Activated CD8-positive, alpha-beta T cell treated with anti-CD3 and anti-CD28 coated beads for 36 hours (primary cell): ENCODE measurements at regions of chr22 and their contacts with region 1.

Region 1: GRCh38 chr22:30634471-30635233 is 929 bp upstream of the SLC35E4 start:
- DNase-seq: peak; percentile 93
- ATAC-seq: peak; percentile 67
- H3K4me3 Mint-ChIP-seq: peak overlapping the region; percentile 78
- H3K27ac Mint-ChIP-seq: peak overlapping the region; percentile 90
- H3K4me1 Mint-ChIP-seq: peaks cover 21% of the 10 kb centered on the region
- H3K27me3 Mint-ChIP-seq: no peaks in the 10 kb centered on the region
- CTCF ChIP-seq: peak; percentile 94

Region 2: DNA sequence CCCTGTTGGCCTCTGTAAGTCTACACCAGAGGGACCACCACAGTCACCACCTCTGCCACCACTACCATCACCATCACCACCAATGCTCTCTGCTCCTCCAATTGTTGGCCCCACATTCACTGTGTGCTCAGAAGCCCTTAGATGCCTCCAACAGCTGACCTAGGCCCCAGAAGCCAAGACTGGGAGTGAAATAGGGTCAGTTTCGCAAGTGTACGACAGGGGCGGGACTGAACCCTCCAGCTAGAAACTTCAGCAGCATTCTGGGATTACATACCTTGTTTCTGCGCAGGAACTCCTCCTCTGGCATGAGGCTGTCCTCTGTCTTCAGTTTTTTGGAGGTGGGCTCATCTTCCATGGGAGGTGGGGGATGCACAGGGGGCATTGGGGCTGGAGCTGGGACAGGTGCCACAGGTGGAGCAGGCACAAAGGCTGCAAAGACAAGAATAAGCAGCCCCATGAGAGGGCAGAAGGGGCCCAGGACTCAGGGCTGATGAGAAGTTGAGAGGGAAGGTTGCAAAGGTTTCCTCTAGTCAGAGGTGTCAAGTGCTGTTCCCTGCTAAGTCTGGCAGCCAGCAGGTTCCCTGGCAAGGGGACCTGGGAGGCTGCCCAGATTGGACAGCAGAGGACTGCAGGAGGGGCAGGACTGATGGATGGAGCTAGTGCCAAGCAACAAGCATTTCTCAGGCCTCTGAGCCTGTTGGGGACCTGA is 297.7 kb before region 1 on chr22:
- CTCF ChIA-PET with region 1: no interaction called
- POLR2A ChIA-PET with region 1: no interaction called
- intact Hi-C with region 1: no loop called
- DNase-seq: no peak
- ATAC-seq: no peak
- H3K4me3 Mint-ChIP-seq: no peak overlapping the region
- H3K27ac Mint-ChIP-seq: peak overlapping the region; percentile 15
- H3K4me1 Mint-ChIP-seq: peaks cover 27% of the 10 kb centered on the region
- H3K27me3 Mint-ChIP-seq: no peaks in the 10 kb centered on the region
- CTCF ChIP-seq: no peak

Region 3: GRCh38 chr22:30413745-30414524 is 220.7 kb before region 1 on chr22:
- CTCF ChIA-PET with region 1: no interaction called
- POLR2A ChIA-PET with region 1: no interaction called
- intact Hi-C with region 1: no loop called
- DNase-seq: no peak
- ATAC-seq: peak; percentile 53
- H3K4me3 Mint-ChIP-seq: no peak overlapping the region
- H3K27ac Mint-ChIP-seq: peak overlapping the region; percentile 79
- H3K4me1 Mint-ChIP-seq: peaks cover 35% of the 10 kb centered on the region
- H3K27me3 Mint-ChIP-seq: no peaks in the 10 kb centered on the region
- CTCF ChIP-seq: no peak

Region 4: DNA sequence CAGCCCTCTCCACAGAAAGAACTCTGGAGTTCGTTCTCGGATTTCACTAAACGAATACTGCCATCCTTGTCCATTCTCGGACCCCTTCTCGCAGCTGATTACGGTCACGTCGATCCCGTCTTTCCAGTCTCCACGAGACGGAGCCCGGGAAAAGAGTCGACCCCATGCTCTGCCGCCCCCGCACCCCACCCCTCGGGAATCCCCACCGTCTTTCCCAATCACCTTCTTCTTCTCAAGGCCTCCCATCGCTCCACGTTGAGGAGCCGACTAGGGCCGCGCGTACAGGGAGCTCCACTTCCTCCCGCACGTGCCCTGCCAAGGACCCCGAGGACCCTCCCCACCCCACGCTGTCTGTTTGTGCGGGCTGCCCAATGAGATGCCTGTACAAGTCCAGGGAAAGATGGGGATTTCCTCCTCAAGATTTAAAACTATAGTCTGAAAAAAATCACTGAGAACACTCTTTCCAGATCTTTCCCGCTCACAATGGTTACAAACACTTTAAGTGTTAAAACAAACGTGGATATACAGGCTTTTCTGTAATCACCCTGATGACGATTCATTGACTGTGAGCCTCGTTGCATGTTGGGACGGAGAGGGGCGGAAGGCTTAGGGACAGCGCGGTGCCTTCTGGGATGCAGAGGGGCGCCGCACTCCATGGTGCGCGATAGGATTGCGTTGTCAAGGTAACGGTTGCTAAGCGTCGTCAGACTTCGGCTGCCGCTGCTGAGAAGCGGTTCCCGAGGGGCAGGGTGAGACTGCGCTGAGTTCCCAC is 42.9 kb before region 1 on chr22 and contains the start of gene PES1:
- CTCF ChIA-PET with region 1: interaction called, 12 read pairs
- POLR2A ChIA-PET with region 1: no interaction called
- intact Hi-C with region 1: no loop called
- DNase-seq: peak; percentile 97
- ATAC-seq: peak; percentile 100
- H3K4me3 Mint-ChIP-seq: no peak within 1 kb of the TSS
- H3K27ac Mint-ChIP-seq: no peak within 1 kb of the TSS
- H3K4me1 Mint-ChIP-seq: peaks cover 15% of the 10 kb centered on the region
- H3K27me3 Mint-ChIP-seq: peaks cover 2% of the 10 kb centered on the region
- CTCF ChIP-seq: no peak
- total RNA-seq, gene PES1: 123 to 131 TPM

Region 5: DNA sequence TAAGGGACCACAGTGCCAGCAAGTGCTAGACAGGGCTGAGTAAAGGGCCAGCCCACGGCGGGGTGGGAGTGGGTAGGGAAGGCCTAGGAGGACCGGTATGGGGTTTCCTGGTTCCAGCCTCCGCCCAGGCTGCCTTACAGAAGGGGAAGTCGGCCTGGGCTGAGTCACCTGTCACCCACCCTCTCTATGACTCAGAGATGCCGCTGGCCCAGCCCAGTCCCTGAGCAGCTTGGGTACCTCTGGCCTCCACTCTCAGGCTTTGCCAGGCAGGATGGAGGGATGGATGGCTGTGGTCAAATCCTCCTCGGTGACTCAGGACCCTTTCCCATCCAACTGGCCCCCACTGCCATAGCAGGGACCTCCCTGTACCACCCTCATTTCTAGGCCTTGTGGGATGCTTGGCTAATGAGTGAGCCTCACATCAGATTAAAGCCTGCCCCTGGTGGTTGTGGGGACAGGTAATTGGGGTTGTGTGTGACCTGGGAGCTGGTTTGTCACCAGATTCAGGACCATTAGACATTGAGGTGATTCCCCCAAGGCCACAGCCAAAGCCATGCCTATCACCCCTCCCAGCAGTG is 14.9 kb after region 1 on chr22:
- CTCF ChIA-PET with region 1: interaction called, 36 read pairs
- POLR2A ChIA-PET with region 1: interaction called, 19 read pairs
- intact Hi-C with region 1: no loop called
- DNase-seq: peak; percentile 94
- ATAC-seq: peak; percentile 99
- H3K4me3 Mint-ChIP-seq: no peak overlapping the region
- H3K27ac Mint-ChIP-seq: peak overlapping the region; percentile 85
- H3K4me1 Mint-ChIP-seq: peaks cover 28% of the 10 kb centered on the region
- H3K27me3 Mint-ChIP-seq: no peaks in the 10 kb centered on the region
- CTCF ChIP-seq: peak; percentile 59

Region 6: GRCh38 chr22:30701872-30702271 is 67.2 kb after region 1 on chr22:
- CTCF ChIA-PET with region 1: interaction called, 12 read pairs
- POLR2A ChIA-PET with region 1: interaction called, 4 read pairs
- intact Hi-C with region 1: no loop called
- DNase-seq: no peak
- ATAC-seq: no peak
- H3K4me3 Mint-ChIP-seq: no peak overlapping the region
- H3K27ac Mint-ChIP-seq: no peak overlapping the region
- H3K4me1 Mint-ChIP-seq: peaks cover 15% of the 10 kb centered on the region
- H3K27me3 Mint-ChIP-seq: peaks cover 2% of the 10 kb centered on the region
- CTCF ChIP-seq: no peak

Region 7: DNA sequence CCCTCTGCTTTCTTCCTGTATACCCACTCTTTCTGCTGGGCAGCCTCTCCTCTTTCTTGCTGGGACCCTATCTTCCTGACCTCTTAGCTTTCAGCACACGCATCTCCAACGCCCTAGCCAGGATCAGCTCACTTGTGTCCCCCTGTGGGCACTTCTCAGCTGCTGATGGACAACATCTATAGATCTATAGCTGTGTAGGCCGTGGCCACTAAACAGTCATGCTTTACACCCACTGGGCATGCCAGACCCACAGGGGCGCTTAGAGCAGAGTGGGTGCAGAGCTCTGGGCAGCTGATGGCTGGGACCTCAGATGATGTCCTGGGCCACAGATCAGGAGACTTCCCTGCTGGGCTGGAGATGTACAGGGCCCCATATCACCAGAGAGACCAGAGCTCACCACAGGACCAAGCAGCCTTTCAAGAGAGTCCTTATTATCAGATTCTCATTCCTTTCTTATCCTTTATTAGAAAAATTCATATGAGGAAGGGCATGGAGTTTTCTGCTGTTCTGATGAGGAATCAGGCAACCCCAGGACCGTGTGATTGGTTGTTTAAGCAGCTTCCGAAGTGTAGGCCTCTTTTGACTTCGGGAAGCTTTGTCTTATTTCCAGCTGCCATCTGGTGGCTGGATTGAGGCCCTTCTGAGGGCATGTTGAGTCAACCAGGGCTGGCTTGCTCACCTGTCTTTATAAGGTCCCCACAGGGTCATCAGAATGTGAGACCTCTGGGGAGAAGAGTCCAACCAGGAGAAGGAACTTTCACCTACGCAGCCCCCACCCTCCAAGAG is 120.5 kb after region 1 on chr22:
- CTCF ChIA-PET with region 1: interaction called, 105 read pairs
- POLR2A ChIA-PET with region 1: interaction called, 16 read pairs
- intact Hi-C with region 1: loop called (anchors 1 kb)
- DNase-seq: peak; percentile 75
- ATAC-seq: peak; percentile 93
- H3K4me3 Mint-ChIP-seq: no peak overlapping the region
- H3K27ac Mint-ChIP-seq: no peak overlapping the region
- H3K4me1 Mint-ChIP-seq: no peaks in the 10 kb centered on the region
- H3K27me3 Mint-ChIP-seq: no peaks in the 10 kb centered on the region
- CTCF ChIP-seq: peak; percentile 69

Region 8: GRCh38 chr22:30920407-30920806 is 285.8 kb after region 1 on chr22:
- CTCF ChIA-PET with region 1: interaction called, 25 read pairs
- POLR2A ChIA-PET with region 1: interaction called, 3 read pairs
- intact Hi-C with region 1: loop called (anchors 10 kb)
- DNase-seq: peak; percentile 93
- ATAC-seq: peak; percentile 79
- H3K4me3 Mint-ChIP-seq: peak overlapping the region; percentile 73
- H3K27ac Mint-ChIP-seq: peak overlapping the region; percentile 56
- H3K4me1 Mint-ChIP-seq: peaks cover 15% of the 10 kb centered on the region
- H3K27me3 Mint-ChIP-seq: no peaks in the 10 kb centered on the region
- CTCF ChIP-seq: peak; percentile 99